ENCODE measurements at regions of chr19 and their contacts with region 1.

Region 1: GRCh38 chr19:56105090-56105701 is 15.9 kb downstream of the ZNF787 start:
- DNase-seq: peak; percentile 83 to 91 (median 89)
- ATAC-seq: peak; percentile 90 to 97 (median 92)
- H3K4me3 ChIP-seq: no peak overlapping the region
- H3K27ac ChIP-seq: peak overlapping the region in 2 of 3 donors; percentile 76 to 90
- H3K4me1 ChIP-seq: peaks cover 0 to 43% (median 23%) of the 10 kb centered on the region in 4 donors
- H3K27me3 ChIP-seq: no peaks in the 10 kb centered on the region
- CTCF ChIP-seq: peak; percentile 77 to 89 (median 83)
- POLR2A ChIP-seq: no peak

Region 2: GRCh38 chr19:55986487-55986886 is 118.7 kb before region 1 on chr19 and contains the start of gene NLRP5:
- intact Hi-C with region 1: no loop called
- DNase-seq: no peak
- ATAC-seq: no peak
- H3K4me3 ChIP-seq: no peak within 1 kb of the TSS
- H3K27ac ChIP-seq: no peak within 1 kb of the TSS
- H3K4me1 ChIP-seq: no peaks in the 10 kb centered on the region
- H3K27me3 ChIP-seq: no peaks in the 10 kb centered on the region
- CTCF ChIP-seq: no peak
- POLR2A ChIP-seq: no peak
- total RNA-seq, gene NLRP5: not detected

Region 3: DNA sequence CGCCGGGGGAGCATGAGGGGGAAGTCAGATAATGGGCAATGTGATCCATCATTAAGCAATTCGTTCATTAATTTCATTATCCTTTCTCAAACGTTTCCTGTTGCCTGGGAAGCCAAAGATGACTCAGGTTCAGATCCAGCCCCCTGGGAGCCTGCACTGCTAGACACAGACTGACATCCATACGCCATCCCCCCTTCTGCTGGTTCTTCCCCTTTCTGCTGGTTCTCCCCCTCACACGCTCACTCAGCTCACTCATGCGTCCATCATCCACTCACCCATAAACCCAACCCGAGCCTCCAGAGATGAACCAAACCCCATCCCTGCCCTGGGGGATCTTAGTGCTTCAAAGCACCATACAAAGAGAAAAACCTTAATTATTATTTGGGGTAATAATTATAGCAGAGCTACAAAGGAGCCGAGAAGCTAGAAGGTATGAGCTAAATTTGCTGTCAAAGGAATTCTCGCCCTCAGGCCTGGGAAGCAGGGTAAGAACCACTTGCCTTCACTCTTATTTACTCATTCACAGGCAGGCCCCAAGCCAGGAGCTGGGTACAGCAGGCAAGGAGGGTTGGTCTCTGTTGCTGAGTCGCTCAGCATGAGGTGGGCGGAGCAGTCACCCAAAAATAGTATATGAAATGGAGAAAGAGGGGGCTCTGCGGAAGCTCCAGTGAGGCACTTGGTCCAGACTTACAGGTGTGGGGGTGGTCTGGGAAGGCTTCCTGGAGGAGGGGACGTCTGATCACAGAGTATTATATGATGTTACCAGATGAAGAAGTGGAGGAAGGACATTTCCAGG is 28.9 kb after region 1 on chr19:
- intact Hi-C with region 1: no loop called
- DNase-seq: no peak
- ATAC-seq: no peak
- H3K4me3 ChIP-seq: no peak overlapping the region
- H3K27ac ChIP-seq: no peak overlapping the region
- H3K4me1 ChIP-seq: peaks cover 0 to 35% (median 15%) of the 10 kb centered on the region in 4 donors
- H3K27me3 ChIP-seq: no peaks in the 10 kb centered on the region
- CTCF ChIP-seq: no peak
- POLR2A ChIP-seq: no peak

Region 4: DNA sequence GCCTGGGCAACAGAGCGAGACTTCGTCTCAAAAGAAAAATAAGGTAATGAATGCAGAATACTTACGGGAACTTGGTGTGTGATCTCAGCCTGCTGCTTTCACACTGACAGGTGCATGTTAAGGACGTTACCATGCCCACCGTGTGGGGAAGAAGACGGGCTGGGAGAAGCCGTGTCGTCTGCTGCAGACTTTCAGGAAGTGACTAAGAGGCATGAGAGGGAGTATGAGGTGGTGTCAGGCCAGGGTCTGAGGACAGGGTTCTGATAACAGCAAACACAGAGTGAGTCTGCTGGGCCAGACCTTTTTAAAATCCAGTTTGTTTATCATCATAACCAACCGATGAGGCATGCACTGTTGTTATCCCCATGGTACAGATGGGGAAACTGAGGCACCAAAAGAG is 57.1 kb after region 1 on chr19:
- intact Hi-C with region 1: loop called in 1 of 2 experiments (anchors 10 kb)
- DNase-seq: no peak
- ATAC-seq: peak in 1 of 4 donors; percentile 14
- H3K4me3 ChIP-seq: no peak overlapping the region
- H3K27ac ChIP-seq: no peak overlapping the region
- H3K4me1 ChIP-seq: no peaks in the 10 kb centered on the region
- H3K27me3 ChIP-seq: no peaks in the 10 kb centered on the region
- CTCF ChIP-seq: no peak
- POLR2A ChIP-seq: no peak